WTC11 (cell line): ENCODE measurements at regions of chr13 and their contacts with region 1.

Region 1: GRCh38 chr13:46523972-46524752 is 28.8 kb upstream of the LRCH1 start:
- DNase-seq: no peak
- ATAC-seq: no peak
- H3K4me3 Mint-ChIP-seq: no peak overlapping the region
- H3K27ac Mint-ChIP-seq: no peak overlapping the region
- H3K4me1 Mint-ChIP-seq: 0 out of 2 replicates have a peak, but pooled peaks cover 3% of the 10 kb centered on the region
- H3K27me3 Mint-ChIP-seq: no peaks in the 10 kb centered on the region
- CTCF ChIP-seq: no peak

Region 2: GRCh38 chr13:46498650-46499049 is 25.5 kb before region 1 on chr13:
- CTCF ChIA-PET with region 1: no interaction called
- POLR2A ChIA-PET with region 1: no interaction called
- DNase-seq: no peak
- ATAC-seq: no peak
- H3K4me3 Mint-ChIP-seq: no peak overlapping the region
- H3K27ac Mint-ChIP-seq: no peak overlapping the region
- H3K4me1 Mint-ChIP-seq: no peaks in the 10 kb centered on the region
- H3K27me3 Mint-ChIP-seq: no peaks in the 10 kb centered on the region
- CTCF ChIP-seq: no peak

Region 3: GRCh38 chr13:46510001-46510400 is 14.2 kb before region 1 on chr13:
- CTCF ChIA-PET with region 1: no interaction called
- POLR2A ChIA-PET with region 1: interaction called, 10 read pairs
- DNase-seq: no peak
- ATAC-seq: no peak
- H3K4me3 Mint-ChIP-seq: no peak overlapping the region
- H3K27ac Mint-ChIP-seq: no peak overlapping the region
- H3K4me1 Mint-ChIP-seq: no peaks in the 10 kb centered on the region
- H3K27me3 Mint-ChIP-seq: no peaks in the 10 kb centered on the region
- CTCF ChIP-seq: no peak

Region 4: GRCh38 chr13:46648166-46648635 is 124.0 kb after region 1 on chr13:
- CTCF ChIA-PET with region 1: no interaction called
- POLR2A ChIA-PET with region 1: no interaction called
- DNase-seq: peak; percentile 73
- ATAC-seq: peak; percentile 84
- H3K4me3 Mint-ChIP-seq: no peak overlapping the region
- H3K27ac Mint-ChIP-seq: no peak overlapping the region
- H3K4me1 Mint-ChIP-seq: peaks cover 27% of the 10 kb centered on the region
- H3K27me3 Mint-ChIP-seq: no peaks in the 10 kb centered on the region
- CTCF ChIP-seq: no peak